Activated T-helper 1 cell treated with anti-CD3 and anti-CD28 coated beads, Interleukin-12 subunit alpha, Interleukin-12 subunit beta, Interleukin-2, Interleukin-4 antibody, amounts not matched to agents 30 ng/mL and 10 ng/mL and 1 ng/mL, durations not matched to agents 14 hours and 24 hours and 36 hours (primary cell): ENCODE measurements at regions of chr3 and their contacts with region 1.

Region 1: DNA sequence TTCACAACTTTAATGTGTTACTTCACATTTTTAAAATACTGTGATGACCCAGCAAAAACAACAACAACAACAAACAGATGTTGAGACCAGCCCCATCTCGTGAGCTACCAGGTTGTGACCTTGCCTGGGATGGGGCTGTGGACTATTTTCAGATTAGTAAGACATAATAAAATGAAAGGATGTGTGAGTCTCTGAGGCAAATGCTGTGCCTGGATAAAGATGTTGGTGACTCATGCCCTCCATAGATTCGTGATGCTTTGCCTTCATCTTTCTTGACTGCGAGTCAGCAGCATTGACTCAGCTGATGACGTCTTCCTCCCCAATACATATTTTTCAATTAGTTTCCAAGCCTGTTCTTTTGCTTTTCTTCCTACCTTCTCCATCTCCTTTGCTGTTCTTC is 453.0 kb upstream of the CFAP20DC start:
- DNase-seq: no peak
- H3K4me3 Mint-ChIP-seq: no peak overlapping the region
- H3K27ac Mint-ChIP-seq: peak overlapping the region; percentile 21
- H3K4me1 Mint-ChIP-seq: peaks cover 16% of the 10 kb centered on the region
- H3K27me3 Mint-ChIP-seq: no peaks in the 10 kb centered on the region

Region 2: GRCh38 chr3:59526999-59527398 is 24.2 kb after region 1 on chr3:
- intact Hi-C with region 1: loop called (anchors 1 kb)
- DNase-seq: no peak
- H3K4me3 Mint-ChIP-seq: no peak overlapping the region
- H3K27ac Mint-ChIP-seq: peak overlapping the region; percentile 19
- H3K4me1 Mint-ChIP-seq: peaks cover 9% of the 10 kb centered on the region
- H3K27me3 Mint-ChIP-seq: no peaks in the 10 kb centered on the region